GM12878 (cell line): ENCODE measurements at regions of chr5 and their contacts with region 1.

Region 1: GRCh38 chr5:58460732-58461286 is 923 bp upstream of the PLK2 start:
- DNase-seq: peak; percentile 49
- ATAC-seq: peak; percentile 92
- H3K4me3 ChIP-seq: peak overlapping the region; percentile 54
- H3K27ac ChIP-seq: no peak overlapping the region
- H3K4me1 ChIP-seq: peaks cover 12% of the 10 kb centered on the region
- H3K27me3 ChIP-seq: peaks cover 2 to 8% of the 10 kb centered on the region in 2 experiments; a peak in 3 of 4 replicates
- CTCF ChIP-seq: peak; percentile 76 to 84 (median 84)
- EP300 ChIP-seq: no peak
- POLR2A ChIP-seq: no peak
- RAD21 ChIP-seq: peak; percentile 91

Region 2: DNA sequence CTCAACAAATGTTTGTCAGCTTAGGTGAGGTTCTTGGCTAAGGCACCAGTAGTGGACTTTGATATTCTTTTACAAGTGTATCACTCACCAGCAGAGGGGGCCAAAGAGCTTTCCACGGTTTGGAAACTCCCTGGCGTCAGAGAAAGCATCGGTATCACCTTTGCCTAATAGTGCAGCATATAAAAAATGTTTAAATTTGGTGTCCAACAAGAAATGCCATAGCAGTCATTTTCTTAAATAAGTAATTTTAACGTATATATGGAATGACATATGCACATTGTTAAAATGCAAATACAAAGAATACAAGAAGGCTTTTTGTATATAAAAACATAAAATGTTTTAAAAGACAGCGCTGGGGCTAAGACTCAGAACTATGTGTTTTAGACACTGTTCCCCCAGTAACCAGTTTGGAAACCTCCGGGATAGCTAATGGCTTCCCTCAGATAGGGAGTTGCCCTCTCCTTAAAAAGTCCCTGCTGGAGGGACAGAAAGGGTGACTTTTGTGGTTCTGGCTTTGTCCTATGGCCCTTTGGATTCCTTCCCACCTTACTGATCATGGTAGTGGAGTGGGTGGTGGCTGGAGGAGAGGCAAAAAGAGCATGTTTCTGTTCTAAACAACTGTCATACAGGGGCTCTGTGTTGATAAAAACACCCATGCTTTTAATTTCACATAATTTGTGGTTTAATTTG is 1162.4 kb before region 1 on chr5:
- CTCF ChIA-PET with region 1: interaction called, 76 read pairs
- POLR2A ChIA-PET with region 1: interaction called, 3 read pairs
- RAD21 ChIA-PET with region 1: interaction called, 42 read pairs
- SMC1A ChIA-PET with region 1: interaction called, 37 read pairs
- in situ Hi-C with region 1: loop called (anchors 5 kb)
- intact Hi-C with region 1: loop called (anchors 1 kb)
- DNase-seq: peak; percentile 34
- ATAC-seq: peak; percentile 94
- H3K4me3 ChIP-seq: 0 out of 2 replicates have a peak overlapping the region, but pooled peaks have one; percentile 18
- H3K27ac ChIP-seq: no peak overlapping the region
- H3K4me1 ChIP-seq: peaks cover 6% of the 10 kb centered on the region
- H3K27me3 ChIP-seq: no peaks in the 10 kb centered on the region
- CTCF ChIP-seq: peak; percentile 75 to 81 (median 76)
- EP300 ChIP-seq: no peak
- POLR2A ChIP-seq: no peak
- RAD21 ChIP-seq: peak; percentile 72

Region 3: GRCh38 chr5:57650360-57651069 is 810.3 kb before region 1 on chr5:
- CTCF ChIA-PET with region 1: interaction called, 61 read pairs
- POLR2A ChIA-PET with region 1: no interaction called
- RAD21 ChIA-PET with region 1: interaction called, 20 read pairs
- SMC1A ChIA-PET with region 1: interaction called, 38 read pairs
- in situ Hi-C with region 1: loop called (anchors 25 kb)
- intact Hi-C with region 1: loop called (anchors 1 kb)
- DNase-seq: peak; percentile 16
- ATAC-seq: peak; percentile 93
- H3K4me3 ChIP-seq: no peak overlapping the region
- H3K27ac ChIP-seq: no peak overlapping the region
- H3K4me1 ChIP-seq: no peaks in the 10 kb centered on the region
- H3K27me3 ChIP-seq: no peaks in the 10 kb centered on the region
- CTCF ChIP-seq: peak; percentile 71 to 77 (median 75)
- EP300 ChIP-seq: no peak
- POLR2A ChIP-seq: no peak
- RAD21 ChIP-seq: peak; percentile 59

Region 4: DNA sequence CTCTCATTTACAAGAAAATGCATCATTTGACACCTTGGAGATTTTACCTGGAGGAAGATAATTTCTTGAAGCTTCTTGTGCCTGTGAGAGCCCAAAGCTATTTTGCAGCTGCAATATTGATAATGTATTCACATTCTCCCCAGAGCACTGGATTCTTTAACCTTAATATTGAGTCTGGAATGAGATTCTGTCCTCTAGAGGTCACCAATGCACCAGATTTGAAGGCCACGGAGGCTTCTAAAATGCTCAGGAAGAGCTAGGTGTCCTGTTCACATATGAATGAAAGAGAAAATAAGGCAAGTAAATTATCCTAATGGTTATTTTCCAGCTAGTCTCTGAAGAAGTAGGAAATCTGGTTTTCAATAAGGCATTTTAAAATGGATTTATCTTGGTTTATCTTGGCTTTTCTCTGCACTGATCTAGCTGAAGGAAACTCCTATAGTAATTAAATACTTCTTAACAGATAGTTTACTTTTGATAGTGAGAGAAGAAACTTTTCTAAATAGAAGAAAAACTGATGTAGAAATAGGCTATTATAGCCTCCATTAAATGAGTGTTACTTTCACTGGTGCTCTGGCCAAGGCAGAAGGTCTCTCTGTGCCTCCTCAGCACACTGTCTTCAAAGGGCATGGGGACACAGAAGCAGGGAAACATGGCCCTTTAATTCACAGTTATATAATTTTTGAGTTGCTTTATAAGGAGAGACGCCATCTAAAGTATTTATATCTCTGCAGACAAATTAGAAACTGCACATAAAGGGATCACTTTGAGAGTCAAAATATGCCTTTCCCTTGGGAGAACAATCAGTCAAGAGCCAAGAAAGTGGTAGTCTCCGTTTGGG is 681.2 kb before region 1 on chr5:
- CTCF ChIA-PET with region 1: interaction called, 80 read pairs
- POLR2A ChIA-PET with region 1: no interaction called
- RAD21 ChIA-PET with region 1: interaction called, 22 read pairs
- SMC1A ChIA-PET with region 1: interaction called, 19 read pairs
- in situ Hi-C with region 1: loop called (anchors 5 kb)
- intact Hi-C with region 1: loop called (anchors 1 kb)
- DNase-seq: no peak
- ATAC-seq: peak; percentile 83
- H3K4me3 ChIP-seq: no peak overlapping the region
- H3K27ac ChIP-seq: no peak overlapping the region
- H3K4me1 ChIP-seq: no peaks in the 10 kb centered on the region
- H3K27me3 ChIP-seq: peaks cover 0 to 2% of the 10 kb centered on the region in 2 experiments; a peak in 1 of 4 replicates
- CTCF ChIP-seq: peak; percentile 40 to 55 (median 45); a peak in 5 of 6 replicates
- EP300 ChIP-seq: no peak
- POLR2A ChIP-seq: no peak
- RAD21 ChIP-seq: peak; percentile 73

Region 5: DNA sequence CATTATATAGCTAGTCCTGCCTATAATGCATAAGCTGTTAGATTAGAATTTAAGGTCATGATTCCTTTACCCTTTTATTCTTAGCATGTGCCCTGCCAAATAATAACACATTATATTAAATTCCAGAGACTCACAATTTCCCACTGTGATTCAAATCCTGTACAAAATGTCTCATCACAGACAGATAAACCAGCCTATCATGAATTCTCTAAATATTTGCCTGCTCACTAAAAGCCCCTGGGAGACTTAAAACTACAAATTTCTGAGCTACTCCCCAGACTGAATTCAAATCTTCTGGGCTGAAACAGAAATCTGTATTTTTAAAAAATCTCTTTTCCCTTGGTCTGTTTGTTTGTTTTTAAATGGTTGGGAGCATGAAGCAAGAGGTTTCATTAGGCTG is 63.1 kb after region 1 on chr5:
- CTCF ChIA-PET with region 1: no interaction called
- POLR2A ChIA-PET with region 1: no interaction called
- RAD21 ChIA-PET with region 1: no interaction called
- SMC1A ChIA-PET with region 1: no interaction called
- in situ Hi-C with region 1: no loop called
- intact Hi-C with region 1: loop called (anchors 10 kb)
- DNase-seq: no peak
- ATAC-seq: no peak
- H3K4me3 ChIP-seq: no peak overlapping the region
- H3K27ac ChIP-seq: no peak overlapping the region
- H3K4me1 ChIP-seq: no peaks in the 10 kb centered on the region
- H3K27me3 ChIP-seq: no peaks in the 10 kb centered on the region
- CTCF ChIP-seq: no peak
- EP300 ChIP-seq: no peak
- POLR2A ChIP-seq: no peak
- RAD21 ChIP-seq: no peak